Posterior cingulate gyrus (tissue), 11 donors: ENCODE measurements at regions of chr5 and their contacts with region 1.

Region 1: GRCh38 chr5:151719228-151720000 is 32.7 kb upstream of the SPARC start:
- DNase-seq: peak in 2 of 10 donors; percentile 56 to 57

Region 2: DNA sequence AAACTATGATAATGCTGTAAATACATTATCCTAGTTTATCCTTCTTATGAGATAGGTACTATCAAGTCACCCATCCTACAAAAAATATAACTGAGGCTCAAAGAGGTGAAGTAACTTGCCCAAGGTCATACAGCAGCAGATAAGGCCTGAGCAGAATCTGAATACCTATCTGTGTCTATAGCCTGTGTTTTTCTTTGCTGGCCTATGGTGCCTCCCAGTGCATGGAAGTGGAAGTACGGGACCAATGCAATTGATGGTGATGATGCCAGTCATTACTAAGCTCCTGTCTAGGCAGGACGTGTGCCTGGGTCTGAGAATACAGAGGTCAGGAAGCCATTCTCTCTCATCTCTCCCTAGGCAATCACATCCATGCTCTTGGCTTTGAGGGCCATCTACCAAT is 196.1 kb before region 1 on chr5:
- intact Hi-C with region 1: loop called (anchors 10 kb)
- DNase-seq: no peak

Region 3: DNA sequence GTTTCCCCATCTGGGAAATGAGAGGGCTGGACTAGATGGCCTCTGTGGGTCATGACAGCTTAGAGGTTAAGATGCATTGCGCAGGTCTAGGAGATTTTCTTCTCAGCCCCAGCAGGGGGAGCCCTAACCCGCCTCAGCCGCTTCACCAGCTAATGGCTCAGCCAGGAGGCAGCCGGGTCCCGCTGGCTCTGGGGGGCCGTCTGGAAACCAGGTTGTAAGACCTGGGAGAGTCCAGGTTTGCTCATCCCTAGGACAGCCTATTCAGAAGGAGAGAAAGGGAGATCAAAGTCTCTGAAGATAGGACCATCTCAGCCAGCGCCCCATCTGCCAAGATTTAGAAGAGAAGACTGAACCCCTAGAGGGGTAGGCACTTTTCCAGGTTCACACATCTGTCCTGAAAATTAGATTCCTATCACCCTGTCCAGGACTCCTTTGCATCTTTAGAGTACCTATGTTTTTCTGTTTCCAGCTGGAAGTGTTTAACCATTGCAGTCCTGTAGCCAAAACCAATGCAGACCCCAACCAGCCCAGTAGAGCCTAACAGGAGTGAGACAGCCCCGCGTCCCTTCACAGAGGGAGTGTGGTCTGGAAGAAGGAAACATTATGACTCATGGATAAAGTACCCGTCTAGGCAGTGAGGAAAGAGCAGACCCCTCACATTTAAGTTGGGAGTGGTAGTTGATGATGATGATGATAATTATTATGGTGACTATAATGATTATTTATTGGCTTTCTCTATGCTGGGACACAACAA is 60.2 kb before region 1 on chr5:
- intact Hi-C with region 1: loop called (anchors 1 kb)
- DNase-seq: peak; percentile 66 to 98 (median 90)

Region 4: GRCh38 chr5:151855701-151856100 is 136.3 kb after region 1 on chr5:
- intact Hi-C with region 1: no loop called
- DNase-seq: no peak